Activated T-helper 1 cell treated with anti-CD3 and anti-CD28 coated beads, Interleukin-12 subunit alpha, Interleukin-12 subunit beta, Interleukin-2, Interleukin-4 antibody, amounts not matched to agents 30 ng/mL and 10 ng/mL and 1 ng/mL, durations not matched to agents 14 hours and 24 hours and 36 hours (primary cell): ENCODE measurements at regions of chr3 and their contacts with region 1.

Region 1: GRCh38 chr3:17151598-17152373 is 267.0 kb downstream of the PLCL2 start:
- DNase-seq: peak; percentile 89
- H3K4me3 Mint-ChIP-seq: peak overlapping the region; percentile 60
- H3K27ac Mint-ChIP-seq: peak overlapping the region; percentile 85
- H3K4me1 Mint-ChIP-seq: peaks cover 45% of the 10 kb centered on the region
- H3K27me3 Mint-ChIP-seq: peaks cover 4% of the 10 kb centered on the region

Region 2: DNA sequence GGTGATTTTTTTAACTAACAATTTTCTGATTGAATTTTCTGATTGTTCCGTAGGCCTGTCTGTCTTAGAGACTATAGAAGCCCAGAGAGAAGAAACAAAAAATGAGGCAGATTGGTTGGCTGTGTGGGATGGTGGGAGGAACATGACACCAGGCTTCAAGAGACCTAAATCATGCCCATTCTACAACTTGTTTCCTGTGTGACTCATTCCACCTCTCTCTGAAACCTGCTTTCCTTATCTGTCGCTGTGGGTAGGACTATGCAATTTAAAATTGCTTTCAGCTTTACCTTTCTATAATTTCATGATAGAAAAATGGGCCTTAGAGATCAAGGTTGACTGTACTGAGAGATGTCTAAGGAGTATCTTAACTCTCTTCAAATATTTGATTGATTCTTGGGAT is 842.2 kb before region 1 on chr3:
- intact Hi-C with region 1: loop called (anchors 5 kb)
- DNase-seq: peak; percentile 50
- H3K4me3 Mint-ChIP-seq: peak overlapping the region; percentile 72
- H3K27ac Mint-ChIP-seq: peak overlapping the region; percentile 92
- H3K4me1 Mint-ChIP-seq: peaks cover 84% of the 10 kb centered on the region
- H3K27me3 Mint-ChIP-seq: no peaks in the 10 kb centered on the region

Region 3: GRCh38 chr3:16884084-16884747 is 267.6 kb before region 1 on chr3:
- intact Hi-C with region 1: loop called (anchors 2 kb)
- DNase-seq: peak; percentile 45
- H3K4me3 Mint-ChIP-seq: peak overlapping the region; percentile 94
- H3K27ac Mint-ChIP-seq: peak overlapping the region; percentile 96
- H3K4me1 Mint-ChIP-seq: peaks cover 38% of the 10 kb centered on the region
- H3K27me3 Mint-ChIP-seq: peaks cover 4% of the 10 kb centered on the region

Region 4: GRCh38 chr3:17044855-17045254 is 106.9 kb before region 1 on chr3:
- intact Hi-C with region 1: loop called (anchors 1 kb)
- DNase-seq: no peak
- H3K4me3 Mint-ChIP-seq: no peak overlapping the region
- H3K27ac Mint-ChIP-seq: peak overlapping the region; percentile 40
- H3K4me1 Mint-ChIP-seq: peaks cover 57% of the 10 kb centered on the region
- H3K27me3 Mint-ChIP-seq: no peaks in the 10 kb centered on the region

Region 5: GRCh38 chr3:17179381-17180210 is 27.8 kb after region 1 on chr3:
- intact Hi-C with region 1: loop called (anchors 1 kb)
- DNase-seq: no peak
- H3K4me3 Mint-ChIP-seq: no peak overlapping the region
- H3K27ac Mint-ChIP-seq: no peak overlapping the region
- H3K4me1 Mint-ChIP-seq: peaks cover 44% of the 10 kb centered on the region
- H3K27me3 Mint-ChIP-seq: peaks cover 12% of the 10 kb centered on the region

Region 6: GRCh38 chr3:17278006-17278405 is 126.2 kb after region 1 on chr3:
- intact Hi-C with region 1: no loop called
- DNase-seq: no peak
- H3K4me3 Mint-ChIP-seq: no peak overlapping the region
- H3K27ac Mint-ChIP-seq: no peak overlapping the region
- H3K4me1 Mint-ChIP-seq: no peaks in the 10 kb centered on the region
- H3K27me3 Mint-ChIP-seq: peaks cover 2% of the 10 kb centered on the region

Region 7: GRCh38 chr3:17771177-17772017 is 619.6 kb after region 1 on chr3:
- intact Hi-C with region 1: loop called (anchors 10 kb)
- DNase-seq: no peak
- H3K4me3 Mint-ChIP-seq: no peak overlapping the region
- H3K27ac Mint-ChIP-seq: no peak overlapping the region
- H3K4me1 Mint-ChIP-seq: peaks cover 30% of the 10 kb centered on the region
- H3K27me3 Mint-ChIP-seq: peaks cover 2% of the 10 kb centered on the region